ENCODE measurements at regions of chr19 and their contacts with region 1.

Region 1: GRCh38 chr19:16382775-16383543 is 58.3 kb downstream of the KLF2 start:
- DNase-seq: peak; percentile 70 to 91 (median 84)
- ATAC-seq: peak; percentile 80
- H3K4me3 ChIP-seq: peak overlapping the region; percentile 40 to 42
- H3K4me3 Mint-ChIP-seq: peak overlapping the region; percentile 54
- H3K27ac ChIP-seq: peak overlapping the region; percentile 66 to 82
- H3K27ac Mint-ChIP-seq: peak overlapping the region; percentile 95
- H3K4me1 ChIP-seq: peaks cover 58% of the 10 kb centered on the region
- H3K4me1 Mint-ChIP-seq: peaks cover 58% of the 10 kb centered on the region
- H3K27me3 ChIP-seq: no peaks in the 10 kb centered on the region
- H3K27me3 Mint-ChIP-seq: no peaks in the 10 kb centered on the region
- CTCF ChIP-seq: peak; percentile 85

Region 2: GRCh38 chr19:16197622-16198369 is 185.2 kb before region 1 on chr19 and contains the start of gene AP1M1:
- CTCF ChIA-PET with region 1: interaction called, 7 read pairs
- POLR2A ChIA-PET with region 1: no interaction called
- intact Hi-C with region 1: loop called in 1 of 2 experiments (anchors 5 kb)
- DNase-seq: peak; percentile 95 to 99 (median 98)
- ATAC-seq: peak; percentile 82
- H3K4me3 ChIP-seq: peak within 1 kb of the TSS; percentile 98 to 99
- H3K4me3 Mint-ChIP-seq: peak within 1 kb of the TSS; percentile 93
- H3K27ac ChIP-seq: peak within 1 kb of the TSS; percentile 87 to 98
- H3K27ac Mint-ChIP-seq: peak within 1 kb of the TSS; percentile 97
- H3K4me1 ChIP-seq: peaks cover 54% of the 10 kb centered on the region
- H3K4me1 Mint-ChIP-seq: peaks cover 49% of the 10 kb centered on the region
- H3K27me3 ChIP-seq: no peaks in the 10 kb centered on the region
- H3K27me3 Mint-ChIP-seq: no peaks in the 10 kb centered on the region
- CTCF ChIP-seq: no peak
- total RNA-seq, gene AP1M1: 76.2 to 83.4 TPM

Region 3: GRCh38 chr19:16268676-16269319 is 114.2 kb before region 1 on chr19:
- CTCF ChIA-PET with region 1: interaction called, 18 read pairs
- POLR2A ChIA-PET with region 1: no interaction called
- intact Hi-C with region 1: no loop called
- DNase-seq: peak in 8 of 9 experiments; percentile 23 to 71 (median 54)
- ATAC-seq: peak; percentile 53
- H3K4me3 ChIP-seq: no peak overlapping the region
- H3K4me3 Mint-ChIP-seq: peak overlapping the region; percentile 35
- H3K27ac ChIP-seq: no peak overlapping the region
- H3K27ac Mint-ChIP-seq: peak overlapping the region; percentile 62
- H3K4me1 ChIP-seq: peaks cover 29% of the 10 kb centered on the region
- H3K4me1 Mint-ChIP-seq: peaks cover 36% of the 10 kb centered on the region
- H3K27me3 ChIP-seq: no peaks in the 10 kb centered on the region
- H3K27me3 Mint-ChIP-seq: no peaks in the 10 kb centered on the region
- CTCF ChIP-seq: no peak

Region 4: GRCh38 chr19:16330368-16330801 is 52.6 kb before region 1 on chr19:
- CTCF ChIA-PET with region 1: interaction called, 200 read pairs
- POLR2A ChIA-PET with region 1: interaction called, 2,627 read pairs
- intact Hi-C with region 1: loop called (anchors 1 kb)
- DNase-seq: peak; percentile 88 to 99 (median 95)
- ATAC-seq: peak; percentile 74
- H3K4me3 ChIP-seq: no peak overlapping the region
- H3K4me3 Mint-ChIP-seq: peak overlapping the region; percentile 59
- H3K27ac ChIP-seq: peak overlapping the region; percentile 93 to 99
- H3K27ac Mint-ChIP-seq: peak overlapping the region; percentile 96
- H3K4me1 ChIP-seq: peaks cover 36% of the 10 kb centered on the region
- H3K4me1 Mint-ChIP-seq: peaks cover 46% of the 10 kb centered on the region
- H3K27me3 ChIP-seq: no peaks in the 10 kb centered on the region
- H3K27me3 Mint-ChIP-seq: no peaks in the 10 kb centered on the region
- CTCF ChIP-seq: no peak

Region 5: GRCh38 chr19:16363133-16363851 is 19.7 kb before region 1 on chr19:
- CTCF ChIA-PET with region 1: interaction called, 131 read pairs
- POLR2A ChIA-PET with region 1: interaction called, 206 read pairs
- intact Hi-C with region 1: loop called in 1 of 2 experiments (anchors 1 kb)
- DNase-seq: no peak
- ATAC-seq: no peak
- H3K4me3 ChIP-seq: no peak overlapping the region
- H3K4me3 Mint-ChIP-seq: no peak overlapping the region
- H3K27ac ChIP-seq: peak overlapping the region in 1 of 2 experiments; percentile 91
- H3K27ac Mint-ChIP-seq: peak overlapping the region; percentile 85
- H3K4me1 ChIP-seq: peaks cover 95% of the 10 kb centered on the region
- H3K4me1 Mint-ChIP-seq: peaks cover 81% of the 10 kb centered on the region
- H3K27me3 ChIP-seq: no peaks in the 10 kb centered on the region
- H3K27me3 Mint-ChIP-seq: no peaks in the 10 kb centered on the region
- CTCF ChIP-seq: no peak

Region 6: DNA sequence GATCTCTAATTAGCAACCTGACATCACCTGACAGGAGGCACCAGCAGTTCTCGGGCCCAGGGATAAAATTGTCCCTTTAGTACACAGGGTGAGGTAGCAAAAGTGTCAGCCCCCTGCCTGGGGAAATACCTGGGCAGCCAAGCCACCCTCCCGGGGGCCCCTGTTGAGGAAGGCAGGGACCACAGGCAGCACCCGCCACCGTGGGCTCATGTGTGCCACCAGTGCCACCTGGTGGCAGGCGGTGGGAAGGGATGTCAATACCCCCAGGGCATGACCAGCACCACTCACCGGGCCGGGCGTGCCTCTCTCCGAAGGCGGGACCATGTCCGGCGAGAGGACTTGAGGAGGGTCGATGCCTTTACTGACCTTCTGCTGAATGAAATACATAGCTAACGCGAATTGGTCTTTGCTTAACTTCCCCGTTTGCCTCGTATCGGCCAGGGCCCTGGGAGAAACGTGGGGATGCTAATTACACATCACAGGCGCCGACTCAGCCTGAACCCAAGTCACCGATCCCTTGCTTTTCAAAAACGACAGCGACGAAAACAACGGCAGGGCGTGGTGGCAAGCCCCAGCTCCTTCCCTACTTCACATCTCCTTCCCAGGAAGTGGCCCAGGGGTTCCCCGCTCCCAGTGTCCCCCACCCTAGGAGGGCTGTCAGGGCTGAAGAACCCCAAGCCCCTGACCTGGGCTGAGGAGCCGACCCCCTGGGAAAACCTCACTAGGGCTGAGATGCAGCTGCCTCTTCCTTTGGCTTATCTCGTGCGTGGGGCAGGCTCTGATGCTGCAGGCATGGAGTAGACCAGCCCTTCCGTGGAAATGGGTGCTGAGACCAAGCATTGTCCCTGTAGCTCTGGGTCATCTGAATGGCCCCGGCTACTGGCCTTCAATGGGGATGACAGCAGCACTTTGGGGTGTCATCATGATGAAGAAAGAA is 35.0 kb after region 1 on chr19:
- CTCF ChIA-PET with region 1: interaction called, 28 read pairs
- POLR2A ChIA-PET with region 1: no interaction called
- intact Hi-C with region 1: loop called in 1 of 2 experiments (anchors 1 kb)
- DNase-seq: peak; percentile 54 to 84 (median 70)
- ATAC-seq: peak; percentile 99
- H3K4me3 ChIP-seq: no peak overlapping the region
- H3K4me3 Mint-ChIP-seq: no peak overlapping the region
- H3K27ac ChIP-seq: no peak overlapping the region
- H3K27ac Mint-ChIP-seq: peak overlapping the region; percentile 32
- H3K4me1 ChIP-seq: peaks cover 6% of the 10 kb centered on the region
- H3K4me1 Mint-ChIP-seq: peaks cover 9% of the 10 kb centered on the region
- H3K27me3 ChIP-seq: no peaks in the 10 kb centered on the region
- H3K27me3 Mint-ChIP-seq: no peaks in the 10 kb centered on the region
- CTCF ChIP-seq: peak; percentile 74

Region 7: GRCh38 chr19:16626796-16627192 is 243.8 kb after region 1 on chr19:
- CTCF ChIA-PET with region 1: no interaction called
- POLR2A ChIA-PET with region 1: no interaction called
- intact Hi-C with region 1: no loop called
- DNase-seq: no peak
- ATAC-seq: no peak
- H3K4me3 ChIP-seq: peak overlapping the region; percentile 68 to 89
- H3K4me3 Mint-ChIP-seq: peak overlapping the region; percentile 91
- H3K27ac ChIP-seq: peak overlapping the region; percentile 53 to 57
- H3K27ac Mint-ChIP-seq: peak overlapping the region; percentile 90
- H3K4me1 ChIP-seq: peaks cover 17% of the 10 kb centered on the region
- H3K4me1 Mint-ChIP-seq: peaks cover 57% of the 10 kb centered on the region
- H3K27me3 ChIP-seq: no peaks in the 10 kb centered on the region
- H3K27me3 Mint-ChIP-seq: no peaks in the 10 kb centered on the region
- CTCF ChIP-seq: no peak